ENCODE measurements at regions of chr1 and their contacts with region 1.

Region 1: GRCh38 chr1:62407405-62408009 is 29.3 kb upstream of the USP1 start:
- DNase-seq: no peak
- ATAC-seq: peak in 1 of 4 donors; percentile 43
- H3K4me3 ChIP-seq: no peak overlapping the region
- H3K27ac ChIP-seq: no peak overlapping the region
- H3K4me1 ChIP-seq: no peaks in the 10 kb centered on the region
- H3K27me3 ChIP-seq: peaks cover 0 to 9% (median 0%) of the 10 kb centered on the region in 9 donors
- CTCF ChIP-seq: peak; percentile 59 to 90 (median 78)
- POLR2A ChIP-seq: no peak

Region 2: DNA sequence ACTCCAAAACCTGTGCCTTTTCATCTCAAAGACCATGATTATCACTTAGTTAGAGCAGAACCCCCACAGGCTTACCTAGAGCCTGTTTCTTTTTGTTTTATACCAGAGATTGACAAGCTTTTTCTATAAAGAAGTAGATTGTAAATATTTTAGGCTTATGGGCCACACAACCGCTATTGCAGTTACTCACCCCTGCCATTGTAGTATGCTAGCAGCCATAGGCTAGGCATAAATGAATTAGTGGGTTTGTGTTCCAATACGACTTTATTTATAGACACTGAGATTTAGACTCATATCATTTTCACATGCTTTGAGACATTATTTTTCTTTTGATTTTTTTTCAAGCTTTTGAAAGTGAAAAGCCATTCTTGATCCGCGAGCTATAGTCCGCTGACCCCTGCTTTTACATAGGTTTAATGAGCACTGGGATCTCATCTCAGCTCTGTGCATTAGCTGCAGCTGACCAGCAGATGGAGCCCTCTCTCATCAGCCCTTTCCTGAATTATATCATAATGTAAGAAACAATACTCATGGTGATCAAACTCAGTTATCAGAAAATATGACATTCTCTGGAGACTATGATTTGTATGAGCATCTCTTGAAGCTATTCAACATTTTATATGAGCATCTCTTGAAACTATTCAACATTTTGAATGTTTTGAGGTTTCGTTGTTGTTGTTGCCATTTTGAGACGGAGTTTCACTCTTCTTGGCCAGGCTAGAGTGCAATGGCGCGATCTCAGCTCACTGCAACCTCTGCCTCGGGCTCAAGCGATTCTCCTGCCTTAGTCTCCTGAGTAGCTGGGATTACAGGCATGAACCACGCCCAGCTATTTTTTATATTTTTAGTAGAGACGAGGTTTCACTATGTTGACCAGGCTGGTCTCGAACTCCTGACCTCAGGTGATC is 324.8 kb before region 1 on chr1:
- intact Hi-C with region 1: loop called in 1 of 10 experiments (anchors 10 kb)
- DNase-seq: peak in 2 of 5 donors; percentile 15 to 28
- ATAC-seq: peak in 3 of 4 donors; percentile 38 to 60 (median 46)
- H3K4me3 ChIP-seq: no peak overlapping the region
- H3K27ac ChIP-seq: no peak overlapping the region
- H3K4me1 ChIP-seq: peaks cover 0 to 12% (median 4%) of the 10 kb centered on the region in 12 donors
- H3K27me3 ChIP-seq: no peaks in the 10 kb centered on the region
- CTCF ChIP-seq: peak; percentile 78 to 99 (median 86)
- POLR2A ChIP-seq: no peak

Region 3: GRCh38 chr1:62175568-62176179 is 231.8 kb before region 1 on chr1:
- intact Hi-C with region 1: loop called (anchors 1 to 2 kb)
- DNase-seq: peak in 2 of 5 donors; percentile 18 to 30
- ATAC-seq: peak in 1 of 4 donors; percentile 26
- H3K4me3 ChIP-seq: no peak overlapping the region
- H3K27ac ChIP-seq: no peak overlapping the region
- H3K4me1 ChIP-seq: peaks cover 0 to 6% (median 0%) of the 10 kb centered on the region in 12 donors
- H3K27me3 ChIP-seq: no peaks in the 10 kb centered on the region
- CTCF ChIP-seq: peak; percentile 60 to 87 (median 76)
- POLR2A ChIP-seq: no peak

Region 4: DNA sequence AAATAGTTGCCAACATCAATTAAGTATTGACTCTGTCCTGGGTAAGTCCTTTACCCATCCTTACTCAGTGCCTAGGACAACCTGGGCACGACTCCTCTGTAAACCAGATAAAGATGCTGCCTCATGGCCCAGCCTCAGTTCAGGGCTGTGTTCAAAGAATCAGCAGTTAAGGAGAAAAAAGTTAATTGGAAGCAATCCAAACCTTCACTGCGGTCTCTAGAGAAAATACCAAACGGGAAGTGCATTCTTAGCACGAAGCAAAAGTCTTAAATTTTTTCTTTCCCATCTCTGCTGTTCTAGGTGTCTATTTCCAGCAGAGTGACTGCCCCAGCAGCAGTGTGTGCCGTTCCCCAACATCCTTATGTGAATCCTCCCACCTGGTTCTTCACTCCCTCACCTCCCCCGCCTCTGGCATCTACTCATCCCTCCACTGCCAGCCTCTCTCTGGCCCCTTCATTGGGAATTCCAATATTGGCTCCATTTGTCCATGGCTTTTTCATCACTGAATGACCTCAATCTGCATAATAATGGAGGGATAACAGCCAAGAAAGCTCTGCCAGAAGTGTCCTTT is 111.5 kb before region 1 on chr1:
- intact Hi-C with region 1: loop called in 4 of 10 experiments (anchors 2 to 10 kb)
- DNase-seq: no peak
- ATAC-seq: peak in 1 of 4 donors; percentile 7
- H3K4me3 ChIP-seq: peak overlapping the region in 1 of 12 donors; percentile 5
- H3K27ac ChIP-seq: peak overlapping the region in 1 of 12 donors; percentile 22
- H3K4me1 ChIP-seq: peaks cover 0 to 39% (median 14%) of the 10 kb centered on the region in 12 donors
- H3K27me3 ChIP-seq: peaks cover 0 to 9% (median 0%) of the 10 kb centered on the region in 9 donors
- CTCF ChIP-seq: no peak
- POLR2A ChIP-seq: no peak

Region 5: DNA sequence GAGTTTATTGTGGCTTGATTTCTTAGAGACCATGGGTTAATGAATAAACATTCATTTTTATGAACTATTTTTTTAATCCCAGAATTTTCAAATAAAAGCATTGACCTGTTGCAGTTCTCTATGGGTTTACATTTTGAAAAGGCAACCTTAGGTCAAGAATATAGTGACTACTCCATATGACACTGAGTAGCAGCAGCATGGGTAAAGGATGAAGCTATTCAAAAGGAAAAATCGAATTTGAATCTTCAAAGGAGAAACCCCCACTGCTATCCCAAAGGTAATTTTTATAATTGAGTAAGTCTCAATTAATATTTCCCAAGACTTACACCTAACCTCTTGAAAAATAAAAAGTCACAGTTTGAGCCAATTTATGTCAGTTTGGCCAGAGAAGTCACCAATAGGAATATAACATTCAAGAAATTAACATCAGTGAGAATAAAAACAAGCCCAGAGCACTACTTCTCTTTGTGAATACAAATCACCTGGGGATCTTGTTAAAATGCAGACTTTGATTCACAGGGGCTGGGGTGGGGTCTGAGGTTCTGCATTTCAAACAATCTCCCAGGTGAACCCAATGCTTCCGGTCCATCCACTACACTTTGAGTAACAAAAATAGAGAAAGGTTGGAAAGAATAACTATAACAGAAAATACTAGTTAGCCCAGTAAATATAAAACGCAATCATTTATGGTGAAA is 69.2 kb after region 1 on chr1:
- intact Hi-C with region 1: no loop called
- DNase-seq: no peak
- ATAC-seq: no peak
- H3K4me3 ChIP-seq: no peak overlapping the region
- H3K27ac ChIP-seq: no peak overlapping the region
- H3K4me1 ChIP-seq: no peaks in the 10 kb centered on the region
- H3K27me3 ChIP-seq: no peaks in the 10 kb centered on the region
- CTCF ChIP-seq: no peak
- POLR2A ChIP-seq: no peak